CD8-positive, alpha-beta T cell (primary cell): ENCODE measurements at regions of chr1 and their contacts with region 1.

Region 1: GRCh38 chr1:92831762-92832536 is at the start of gene RPL5:
- DNase-seq: peak; percentile 93 to 99 (median 97)
- ATAC-seq: peak; percentile 86
- H3K4me3 ChIP-seq: peak within 1 kb of the TSS; percentile 96 to 100
- H3K4me3 Mint-ChIP-seq: peak within 1 kb of the TSS; percentile 98
- H3K27ac ChIP-seq: peak within 1 kb of the TSS; percentile 84 to 98
- H3K27ac Mint-ChIP-seq: peak within 1 kb of the TSS; percentile 99
- H3K4me1 ChIP-seq: peaks cover 37% of the 10 kb centered on the region
- H3K4me1 Mint-ChIP-seq: peaks cover 49% of the 10 kb centered on the region
- H3K27me3 ChIP-seq: no peaks in the 10 kb centered on the region
- H3K27me3 Mint-ChIP-seq: no peaks in the 10 kb centered on the region
- CTCF ChIP-seq: peak; percentile 90
- total RNA-seq, gene RPL5: 1,826 to 1,914 TPM

Region 2: DNA sequence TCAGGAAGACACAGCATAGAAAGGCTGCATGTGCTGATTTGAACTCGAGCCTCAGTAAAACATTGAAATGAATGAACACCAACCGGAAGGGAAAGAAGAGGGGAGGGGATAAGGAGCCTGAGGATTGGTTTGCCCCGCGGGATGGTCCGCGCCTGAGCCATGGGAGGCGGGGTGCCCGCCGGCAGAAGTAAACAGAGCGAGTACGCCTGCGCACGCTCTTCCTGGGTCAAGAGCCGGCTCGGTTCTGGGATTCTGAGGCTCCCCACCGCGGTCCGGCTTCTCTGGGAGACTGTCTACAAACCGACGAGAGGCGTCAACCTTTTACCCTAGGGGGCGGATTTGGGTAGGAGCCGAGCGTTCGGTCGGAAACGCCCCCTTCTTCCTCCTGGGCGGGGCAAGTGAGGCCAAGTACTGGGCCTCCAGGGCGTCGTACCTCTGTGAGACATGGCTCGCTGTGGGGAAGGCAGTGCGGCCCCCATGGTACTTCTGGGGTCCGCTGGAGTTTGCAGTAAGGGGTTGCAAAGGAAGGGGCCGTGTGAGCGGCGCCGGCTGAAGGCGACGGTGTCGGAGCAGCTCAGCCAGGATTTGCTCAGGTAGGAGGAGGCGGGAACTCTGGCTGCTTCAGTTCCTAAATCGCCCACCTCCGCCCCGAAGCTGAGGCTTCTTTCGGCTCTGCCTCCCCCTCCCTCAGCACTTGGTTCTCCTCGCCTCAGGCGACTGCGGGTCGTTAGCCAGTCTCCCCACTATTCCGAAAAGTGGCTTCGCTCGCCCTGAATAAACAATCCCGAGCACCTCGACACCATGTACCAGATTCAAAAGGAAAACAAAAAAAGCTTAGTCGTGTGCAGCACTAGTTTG is 751.6 kb before region 1 on chr1 and contains the start of gene BTBD8:
- CTCF ChIA-PET with region 1: no interaction called
- POLR2A ChIA-PET with region 1: no interaction called
- intact Hi-C with region 1: loop called in 1 of 2 experiments (anchors 1 kb)
- DNase-seq: peak; percentile 75 to 91 (median 88)
- ATAC-seq: peak; percentile 97
- H3K4me3 ChIP-seq: peak within 1 kb of the TSS; percentile 82 to 88
- H3K4me3 Mint-ChIP-seq: peak within 1 kb of the TSS; percentile 95
- H3K27ac ChIP-seq: peak within 1 kb of the TSS; percentile 60 to 71
- H3K27ac Mint-ChIP-seq: peak within 1 kb of the TSS; percentile 93
- H3K4me1 ChIP-seq: peaks cover 5% of the 10 kb centered on the region
- H3K4me1 Mint-ChIP-seq: peaks cover 13% of the 10 kb centered on the region
- H3K27me3 ChIP-seq: no peaks in the 10 kb centered on the region
- H3K27me3 Mint-ChIP-seq: no peaks in the 10 kb centered on the region
- CTCF ChIP-seq: no peak
- total RNA-seq, gene BTBD8: 0.72 to 1.2 TPM

Region 3: GRCh38 chr1:92739669-92740524 is 92.1 kb before region 1 on chr1:
- CTCF ChIA-PET with region 1: no interaction called
- POLR2A ChIA-PET with region 1: no interaction called
- intact Hi-C with region 1: no loop called
- DNase-seq: no peak
- ATAC-seq: no peak
- H3K4me3 ChIP-seq: no peak overlapping the region
- H3K4me3 Mint-ChIP-seq: no peak overlapping the region
- H3K27ac ChIP-seq: no peak overlapping the region
- H3K27ac Mint-ChIP-seq: no peak overlapping the region
- H3K4me1 ChIP-seq: no peaks in the 10 kb centered on the region
- H3K4me1 Mint-ChIP-seq: no peaks in the 10 kb centered on the region
- H3K27me3 ChIP-seq: no peaks in the 10 kb centered on the region
- H3K27me3 Mint-ChIP-seq: peaks cover 2% of the 10 kb centered on the region
- CTCF ChIP-seq: no peak

Region 4: DNA sequence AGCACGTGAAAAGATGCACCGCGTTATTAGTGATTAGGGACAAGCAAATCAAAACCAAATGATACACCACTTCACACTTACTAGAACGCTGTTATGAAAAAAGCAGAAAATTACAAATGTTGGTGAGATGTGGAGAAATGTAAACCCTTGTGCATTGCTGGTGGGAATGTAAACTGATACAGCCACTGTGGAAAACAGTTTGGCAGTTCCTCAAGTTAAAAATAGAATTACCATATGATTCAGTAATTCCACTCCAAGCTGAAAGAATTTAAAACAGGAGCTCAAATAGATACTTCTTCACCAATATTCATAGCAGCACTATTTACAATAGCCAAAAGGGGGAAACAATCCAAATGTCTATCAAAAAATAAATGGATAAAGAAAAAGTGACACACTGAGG is 36.8 kb before region 1 on chr1:
- CTCF ChIA-PET with region 1: no interaction called
- POLR2A ChIA-PET with region 1: no interaction called
- intact Hi-C with region 1: no loop called
- DNase-seq: no peak
- ATAC-seq: no peak
- H3K4me3 ChIP-seq: no peak overlapping the region
- H3K4me3 Mint-ChIP-seq: no peak overlapping the region
- H3K27ac ChIP-seq: no peak overlapping the region
- H3K27ac Mint-ChIP-seq: no peak overlapping the region
- H3K4me1 ChIP-seq: no peaks in the 10 kb centered on the region
- H3K4me1 Mint-ChIP-seq: no peaks in the 10 kb centered on the region
- H3K27me3 ChIP-seq: peaks cover 0 to 5% of the 10 kb centered on the region in 2 experiments
- H3K27me3 Mint-ChIP-seq: peaks cover 19% of the 10 kb centered on the region
- CTCF ChIP-seq: no peak

Region 5: GRCh38 chr1:92817986-92818764 is 13.8 kb before region 1 on chr1:
- CTCF ChIA-PET with region 1: interaction called, 17 read pairs
- POLR2A ChIA-PET with region 1: interaction called, 4 read pairs
- intact Hi-C with region 1: no loop called
- DNase-seq: peak in 3 of 9 experiments; percentile 14 to 54 (median 48)
- ATAC-seq: peak; percentile 69
- H3K4me3 ChIP-seq: no peak overlapping the region
- H3K4me3 Mint-ChIP-seq: no peak overlapping the region
- H3K27ac ChIP-seq: no peak overlapping the region
- H3K27ac Mint-ChIP-seq: no peak overlapping the region
- H3K4me1 ChIP-seq: no peaks in the 10 kb centered on the region
- H3K4me1 Mint-ChIP-seq: no peaks in the 10 kb centered on the region
- H3K27me3 ChIP-seq: peaks cover 0 to 2% of the 10 kb centered on the region in 2 experiments
- H3K27me3 Mint-ChIP-seq: peaks cover 11% of the 10 kb centered on the region
- CTCF ChIP-seq: peak; percentile 66

Region 6: GRCh38 chr1:92994105-92994712 is 162.3 kb after region 1 on chr1:
- CTCF ChIA-PET with region 1: interaction called, 12 read pairs
- POLR2A ChIA-PET with region 1: interaction called, 3 read pairs
- intact Hi-C with region 1: no loop called
- DNase-seq: peak; percentile 30 to 90 (median 76)
- ATAC-seq: peak; percentile 91
- H3K4me3 ChIP-seq: no peak overlapping the region
- H3K4me3 Mint-ChIP-seq: no peak overlapping the region
- H3K27ac ChIP-seq: no peak overlapping the region
- H3K27ac Mint-ChIP-seq: peak overlapping the region; percentile 11
- H3K4me1 ChIP-seq: peaks cover 34% of the 10 kb centered on the region
- H3K4me1 Mint-ChIP-seq: peaks cover 45% of the 10 kb centered on the region
- H3K27me3 ChIP-seq: no peaks in the 10 kb centered on the region
- H3K27me3 Mint-ChIP-seq: no peaks in the 10 kb centered on the region
- CTCF ChIP-seq: peak; percentile 77

Region 7: DNA sequence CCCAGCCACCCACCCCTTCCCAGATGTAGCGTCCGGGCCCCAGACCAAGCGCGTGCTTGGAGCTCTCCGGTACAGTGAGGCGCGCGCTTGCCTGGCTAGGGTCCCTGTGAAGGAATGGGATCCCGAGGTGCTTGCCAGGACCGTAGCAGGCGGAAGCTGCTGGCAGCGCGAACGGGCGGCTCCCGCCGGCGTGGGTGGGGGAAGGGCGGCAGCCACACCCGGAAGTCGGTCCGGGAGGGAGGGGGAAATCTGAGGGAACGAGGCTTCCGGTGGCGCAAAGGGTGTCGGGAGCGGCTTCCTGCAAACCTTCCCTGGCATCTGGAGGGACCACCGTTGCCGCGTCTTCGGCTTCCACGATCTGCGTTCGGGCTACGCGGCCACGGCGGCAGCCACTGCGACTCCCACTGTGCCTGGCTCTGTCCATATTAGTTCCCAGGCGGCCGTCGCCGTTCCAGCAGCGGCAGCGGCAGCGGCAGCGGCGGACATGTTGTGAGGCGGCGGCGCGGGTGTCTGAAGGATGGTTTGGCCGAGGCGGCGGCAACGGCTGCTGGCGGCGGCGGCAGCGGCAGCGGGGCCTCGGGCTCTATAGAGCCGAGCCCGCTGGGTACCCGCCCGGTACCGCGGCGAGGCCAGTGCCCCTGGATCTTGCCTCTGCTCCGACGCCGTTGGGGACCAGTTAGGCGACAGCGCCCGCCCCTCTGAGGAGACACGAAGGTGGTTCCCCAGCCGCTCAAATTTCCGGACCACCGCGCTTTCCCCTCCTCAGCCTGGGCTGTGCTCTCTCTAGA is 513.9 kb after region 1 on chr1 and contains the start of gene DR1:
- CTCF ChIA-PET with region 1: no interaction called
- POLR2A ChIA-PET with region 1: interaction called, 3 read pairs
- intact Hi-C with region 1: loop called (anchors 1 to 5 kb)
- DNase-seq: peak; percentile 81 to 94 (median 90)
- ATAC-seq: peak; percentile 74
- H3K4me3 ChIP-seq: peak within 1 kb of the TSS; percentile 80 to 81
- H3K4me3 Mint-ChIP-seq: peak within 1 kb of the TSS; percentile 95
- H3K27ac ChIP-seq: peak within 1 kb of the TSS; percentile 72 to 91
- H3K27ac Mint-ChIP-seq: peak within 1 kb of the TSS; percentile 98
- H3K4me1 ChIP-seq: peaks cover 32% of the 10 kb centered on the region
- H3K4me1 Mint-ChIP-seq: peaks cover 51% of the 10 kb centered on the region
- H3K27me3 ChIP-seq: no peaks in the 10 kb centered on the region
- H3K27me3 Mint-ChIP-seq: no peaks in the 10 kb centered on the region
- CTCF ChIP-seq: no peak
- total RNA-seq, gene DR1: 49.1 to 49.9 TPM

Region 8: GRCh38 chr1:94417978-94418663 is 1586.2 kb after region 1 on chr1 and contains the start of gene ABCD3:
- CTCF ChIA-PET with region 1: no interaction called
- POLR2A ChIA-PET with region 1: no interaction called
- intact Hi-C with region 1: loop called in 1 of 2 experiments (anchors 2 kb)
- DNase-seq: peak; percentile 93 to 99 (median 97)
- ATAC-seq: peak; percentile 91
- H3K4me3 ChIP-seq: peak within 1 kb of the TSS; percentile 63 to 81
- H3K4me3 Mint-ChIP-seq: no peak within 1 kb of the TSS
- H3K27ac ChIP-seq: peak within 1 kb of the TSS; percentile 67 to 85
- H3K27ac Mint-ChIP-seq: peak within 1 kb of the TSS; percentile 85
- H3K4me1 ChIP-seq: peaks cover 27% of the 10 kb centered on the region
- H3K4me1 Mint-ChIP-seq: peaks cover 42% of the 10 kb centered on the region
- H3K27me3 ChIP-seq: no peaks in the 10 kb centered on the region
- H3K27me3 Mint-ChIP-seq: peaks cover 2% of the 10 kb centered on the region
- CTCF ChIP-seq: no peak
- total RNA-seq, gene ABCD3: 17.9 to 18.1 TPM